Naive thymus-derived CD4-positive, alpha-beta T cell (primary cell): ENCODE measurements at regions of chr1 and their contacts with region 1.

Region 1: GRCh38 chr1:167763525-167764220 is 41.9 kb downstream of the MPZL1 start:
- DNase-seq: no peak
- ATAC-seq: no peak
- H3K4me3 ChIP-seq: no peak overlapping the region
- H3K4me3 Mint-ChIP-seq: no peak overlapping the region
- H3K27ac ChIP-seq: no peak overlapping the region
- H3K27ac Mint-ChIP-seq: no peak overlapping the region
- H3K4me1 ChIP-seq: peaks cover 0 to 17% of the 10 kb centered on the region in 2 donors
- H3K4me1 Mint-ChIP-seq: peaks cover 24 to 41% (median 27%) of the 10 kb centered on the region in 7 donors
- H3K27me3 ChIP-seq: no peaks in the 10 kb centered on the region
- H3K27me3 Mint-ChIP-seq: no peaks in the 10 kb centered on the region

Region 2: DNA sequence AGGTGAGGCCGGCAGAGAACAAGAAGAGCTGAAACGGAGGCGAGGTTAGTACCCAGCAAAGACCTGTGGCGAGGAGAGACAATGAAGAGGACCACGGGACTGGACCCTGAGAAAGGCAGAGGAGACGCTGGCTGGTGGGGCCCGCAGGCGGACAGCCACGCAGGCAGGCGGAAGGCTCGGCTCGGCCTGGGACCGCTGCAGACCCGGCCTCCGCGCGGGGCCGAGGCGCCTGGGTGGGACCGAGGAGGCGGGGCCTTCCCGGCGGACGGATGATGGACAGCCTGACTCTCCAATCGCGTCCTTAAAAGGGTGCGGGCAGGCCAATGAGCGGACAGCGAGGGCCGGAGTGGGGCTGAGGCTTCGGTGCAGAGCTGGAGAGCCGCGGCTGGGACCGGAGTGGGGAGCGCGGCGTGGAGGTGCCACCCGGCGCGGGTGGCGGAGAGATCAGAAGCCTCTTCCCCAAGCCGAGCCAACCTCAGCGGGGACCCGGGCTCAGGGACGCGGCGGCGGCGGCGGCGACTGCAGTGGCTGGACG is 42.0 kb before region 1 on chr1 and contains the start of gene MPZL1:
- CTCF ChIA-PET with region 1: interaction called, 3 read pairs
- POLR2A ChIA-PET with region 1: no interaction called
- intact Hi-C with region 1: loop called in 1 of 2 experiments (anchors 5 kb)
- DNase-seq: peak; percentile 81 to 96 (median 88)
- ATAC-seq: peak; percentile 99
- H3K4me3 ChIP-seq: peak within 1 kb of the TSS; percentile 64
- H3K4me3 Mint-ChIP-seq: peak within 1 kb of the TSS; percentile 85 to 96 (median 91)
- H3K27ac ChIP-seq: peak within 1 kb of the TSS; percentile 70
- H3K27ac Mint-ChIP-seq: peak within 1 kb of the TSS; percentile 75 to 95 (median 86)
- H3K4me1 ChIP-seq: peaks cover 5 to 18% of the 10 kb centered on the region in 2 donors
- H3K4me1 Mint-ChIP-seq: peaks cover 35 to 76% (median 65%) of the 10 kb centered on the region in 7 donors
- H3K27me3 ChIP-seq: no peaks in the 10 kb centered on the region
- H3K27me3 Mint-ChIP-seq: peaks cover 0 to 5% (median 0%) of the 10 kb centered on the region in 5 donors
- total RNA-seq, gene MPZL1: 4.8 to 25.3 (median 8.6) TPM

Region 3: GRCh38 chr1:167774710-167775109 is 11.0 kb after region 1 on chr1:
- CTCF ChIA-PET with region 1: no interaction called
- POLR2A ChIA-PET with region 1: no interaction called
- intact Hi-C with region 1: no loop called
- DNase-seq: no peak
- ATAC-seq: no peak
- H3K4me3 ChIP-seq: no peak overlapping the region
- H3K4me3 Mint-ChIP-seq: no peak overlapping the region
- H3K27ac ChIP-seq: no peak overlapping the region
- H3K27ac Mint-ChIP-seq: no peak overlapping the region
- H3K4me1 ChIP-seq: peaks cover 0 to 8% of the 10 kb centered on the region in 2 donors
- H3K4me1 Mint-ChIP-seq: peaks cover 7 to 27% (median 15%) of the 10 kb centered on the region in 7 donors
- H3K27me3 ChIP-seq: no peaks in the 10 kb centered on the region
- H3K27me3 Mint-ChIP-seq: no peaks in the 10 kb centered on the region